CD4-positive, alpha-beta T cell (primary cell): ENCODE measurements at regions of chr10 and their contacts with region 1.

Region 1: DNA sequence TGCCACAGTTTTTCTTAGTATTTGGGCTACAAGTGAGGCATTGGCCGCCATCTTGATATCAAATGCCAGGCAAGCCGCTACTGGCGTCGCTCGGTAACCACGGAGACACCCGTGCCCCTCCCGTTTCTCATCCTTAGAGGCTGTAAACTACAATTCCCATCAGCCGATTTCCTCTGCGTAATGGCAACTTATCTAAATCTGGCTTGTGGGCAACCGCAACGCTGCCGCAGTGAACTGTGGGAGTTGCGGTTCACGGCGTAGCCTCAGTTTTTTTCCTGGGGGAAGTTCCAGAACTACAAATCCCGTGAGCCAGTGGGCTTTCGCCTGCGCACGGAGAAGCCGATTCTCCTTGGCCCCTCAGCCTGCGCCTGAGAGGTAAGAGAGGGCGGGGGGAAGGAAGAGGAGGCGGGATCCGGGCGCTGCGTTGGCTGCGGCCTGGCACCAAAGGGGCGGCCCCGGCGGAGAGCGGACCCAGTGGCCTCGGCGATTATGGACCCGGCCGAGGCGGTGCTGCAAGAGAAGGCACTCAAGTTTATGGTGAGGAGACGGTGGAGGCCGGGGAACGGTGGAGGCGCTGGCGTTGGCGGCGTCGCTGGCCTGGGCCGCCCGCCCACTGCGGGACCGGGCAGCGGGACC is at the start of gene BTRC:
- DNase-seq: peak; percentile 87 to 99 (median 92)
- ATAC-seq: peak; percentile 94
- H3K4me3 ChIP-seq: peak within 1 kb of the TSS; percentile 79
- H3K4me3 Mint-ChIP-seq: peak within 1 kb of the TSS; percentile 100
- H3K27ac ChIP-seq: peak within 1 kb of the TSS; percentile 26 to 86
- H3K27ac Mint-ChIP-seq: peak within 1 kb of the TSS; percentile 94
- H3K4me1 ChIP-seq: peaks cover 17% of the 10 kb centered on the region
- H3K4me1 Mint-ChIP-seq: peaks cover 39% of the 10 kb centered on the region
- H3K27me3 ChIP-seq: peaks cover 0 to 5% of the 10 kb centered on the region in 2 experiments
- H3K27me3 Mint-ChIP-seq: peaks cover 17% of the 10 kb centered on the region
- CTCF ChIP-seq: no peak
- total RNA-seq, gene BTRC: 13.1 to 13.2 TPM

Region 2: DNA sequence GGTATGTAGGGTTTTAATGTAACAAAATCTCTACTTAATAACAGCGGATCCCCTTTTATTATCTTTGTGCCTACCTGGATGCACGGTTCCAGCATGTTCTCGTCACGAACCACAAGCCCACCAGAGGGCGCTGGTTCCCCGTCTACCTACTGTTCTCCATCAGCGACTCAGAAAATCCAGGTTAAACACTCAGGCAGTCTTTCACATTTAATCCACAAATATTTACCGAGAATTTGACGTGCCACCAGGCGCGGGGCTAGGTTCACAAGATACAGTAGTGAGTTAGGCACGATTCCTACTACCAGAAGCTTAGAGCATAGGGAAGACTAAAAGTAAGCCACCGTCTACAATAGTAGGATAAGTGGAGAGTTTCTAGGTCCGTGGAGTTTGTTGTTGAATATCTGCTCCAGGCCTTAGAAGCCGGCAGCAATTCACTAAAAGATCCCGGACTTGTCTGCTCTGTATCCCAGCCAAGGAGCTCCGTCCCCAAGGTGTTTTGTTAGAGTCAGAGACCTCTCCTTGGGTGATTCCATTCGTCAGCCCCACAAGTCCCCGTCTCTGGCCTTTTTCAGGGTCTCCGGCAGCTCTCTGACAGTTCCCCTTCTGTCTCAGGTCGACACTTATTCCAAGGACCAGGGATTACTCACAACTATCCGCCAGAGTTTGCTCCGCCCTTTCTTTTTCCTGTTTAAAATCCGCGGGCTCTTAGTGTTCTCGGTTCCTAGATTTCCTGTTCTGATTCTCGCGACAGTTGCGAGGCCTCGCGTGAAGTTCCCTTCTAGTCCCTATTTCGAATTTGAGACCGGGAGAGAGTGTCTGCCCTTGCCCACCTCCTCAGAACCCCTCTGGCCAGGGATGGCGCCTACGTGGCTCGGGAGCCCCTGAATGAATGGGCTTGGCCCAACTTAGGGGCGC is 293.5 kb before region 1 on chr10:
- CTCF ChIA-PET with region 1: no interaction called
- POLR2A ChIA-PET with region 1: no interaction called
- intact Hi-C with region 1: loop called in 1 of 2 experiments (anchors 10 kb)
- DNase-seq: peak; percentile 79 to 95 (median 90)
- ATAC-seq: peak; percentile 70
- H3K4me3 ChIP-seq: peak overlapping the region; percentile 85
- H3K4me3 Mint-ChIP-seq: peak overlapping the region; percentile 95
- H3K27ac ChIP-seq: peak overlapping the region; percentile 88 to 91
- H3K27ac Mint-ChIP-seq: peak overlapping the region; percentile 81
- H3K4me1 ChIP-seq: peaks cover 40% of the 10 kb centered on the region
- H3K4me1 Mint-ChIP-seq: peaks cover 31% of the 10 kb centered on the region
- H3K27me3 ChIP-seq: peaks cover 27% of the 10 kb centered on the region in 2 experiments
- H3K27me3 Mint-ChIP-seq: peaks cover 20% of the 10 kb centered on the region
- CTCF ChIP-seq: peak; percentile 98

Region 3: DNA sequence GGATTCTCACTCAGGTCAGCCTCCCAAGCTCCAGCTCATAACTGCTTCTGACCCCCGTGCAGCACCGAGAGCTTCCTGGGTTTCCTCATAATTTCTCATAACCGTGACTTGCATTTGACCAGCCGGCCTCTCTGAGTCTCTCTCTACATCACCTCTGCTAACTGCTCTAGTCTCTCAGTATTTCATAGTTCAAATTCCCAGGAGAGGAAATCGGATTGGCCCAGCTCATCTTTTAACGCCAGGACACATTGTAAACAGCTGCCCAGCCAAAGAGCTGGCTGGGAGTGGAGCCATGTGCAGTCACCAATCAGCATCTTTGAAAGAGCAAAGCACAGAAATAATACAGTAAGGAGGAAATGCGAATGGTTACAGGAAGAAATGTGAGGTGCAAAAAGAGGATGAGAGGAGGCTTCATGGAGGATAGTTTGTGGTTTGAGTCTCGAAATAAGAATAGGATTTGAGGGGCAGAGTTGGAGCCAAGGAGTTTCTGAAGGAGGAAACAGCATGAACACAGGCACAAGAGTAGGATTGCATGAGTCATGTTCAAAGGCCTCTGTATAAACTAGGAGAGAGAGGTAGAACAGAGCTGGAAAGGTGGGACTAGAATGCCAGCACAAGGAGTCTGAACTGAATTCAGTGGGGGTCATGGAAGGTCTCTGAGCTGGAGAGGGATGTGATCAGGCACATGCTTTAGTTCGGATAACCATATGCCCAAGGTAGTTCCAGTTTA is 109.3 kb before region 1 on chr10:
- CTCF ChIA-PET with region 1: no interaction called
- POLR2A ChIA-PET with region 1: no interaction called
- intact Hi-C with region 1: no loop called
- DNase-seq: no peak
- ATAC-seq: no peak
- H3K4me3 ChIP-seq: no peak overlapping the region
- H3K4me3 Mint-ChIP-seq: no peak overlapping the region
- H3K27ac ChIP-seq: no peak overlapping the region
- H3K27ac Mint-ChIP-seq: no peak overlapping the region
- H3K4me1 ChIP-seq: no peaks in the 10 kb centered on the region
- H3K4me1 Mint-ChIP-seq: no peaks in the 10 kb centered on the region
- H3K27me3 ChIP-seq: peaks cover 29 to 50% of the 10 kb centered on the region in 2 experiments
- H3K27me3 Mint-ChIP-seq: peaks cover 80% of the 10 kb centered on the region
- CTCF ChIP-seq: no peak

Region 4: GRCh38 chr10:101441541-101442455 is 88.0 kb after region 1 on chr10:
- CTCF ChIA-PET with region 1: no interaction called
- POLR2A ChIA-PET with region 1: no interaction called
- intact Hi-C with region 1: no loop called
- DNase-seq: peak in 6 of 14 experiments; percentile 3 to 63 (median 28)
- ATAC-seq: peak; percentile 98
- H3K4me3 ChIP-seq: no peak overlapping the region
- H3K4me3 Mint-ChIP-seq: no peak overlapping the region
- H3K27ac ChIP-seq: no peak overlapping the region
- H3K27ac Mint-ChIP-seq: no peak overlapping the region
- H3K4me1 ChIP-seq: no peaks in the 10 kb centered on the region
- H3K4me1 Mint-ChIP-seq: peaks cover 10% of the 10 kb centered on the region
- H3K27me3 ChIP-seq: no peaks in the 10 kb centered on the region
- H3K27me3 Mint-ChIP-seq: no peaks in the 10 kb centered on the region
- CTCF ChIP-seq: peak; percentile 31

Region 5: GRCh38 chr10:101830322-101831168 is 476.7 kb after region 1 on chr10:
- CTCF ChIA-PET with region 1: no interaction called
- POLR2A ChIA-PET with region 1: no interaction called
- intact Hi-C with region 1: loop called in 1 of 2 experiments (anchors 10 kb)
- DNase-seq: peak; percentile 91 to 99 (median 94)
- ATAC-seq: peak; percentile 79
- H3K4me3 ChIP-seq: peak overlapping the region; percentile 63
- H3K4me3 Mint-ChIP-seq: peak overlapping the region; percentile 94
- H3K27ac ChIP-seq: peak overlapping the region; percentile 76 to 85
- H3K27ac Mint-ChIP-seq: peak overlapping the region; percentile 99
- H3K4me1 ChIP-seq: peaks cover 69% of the 10 kb centered on the region
- H3K4me1 Mint-ChIP-seq: peaks cover 55% of the 10 kb centered on the region
- H3K27me3 ChIP-seq: no peaks in the 10 kb centered on the region
- H3K27me3 Mint-ChIP-seq: peaks cover 5% of the 10 kb centered on the region
- CTCF ChIP-seq: no peak

Region 6: DNA sequence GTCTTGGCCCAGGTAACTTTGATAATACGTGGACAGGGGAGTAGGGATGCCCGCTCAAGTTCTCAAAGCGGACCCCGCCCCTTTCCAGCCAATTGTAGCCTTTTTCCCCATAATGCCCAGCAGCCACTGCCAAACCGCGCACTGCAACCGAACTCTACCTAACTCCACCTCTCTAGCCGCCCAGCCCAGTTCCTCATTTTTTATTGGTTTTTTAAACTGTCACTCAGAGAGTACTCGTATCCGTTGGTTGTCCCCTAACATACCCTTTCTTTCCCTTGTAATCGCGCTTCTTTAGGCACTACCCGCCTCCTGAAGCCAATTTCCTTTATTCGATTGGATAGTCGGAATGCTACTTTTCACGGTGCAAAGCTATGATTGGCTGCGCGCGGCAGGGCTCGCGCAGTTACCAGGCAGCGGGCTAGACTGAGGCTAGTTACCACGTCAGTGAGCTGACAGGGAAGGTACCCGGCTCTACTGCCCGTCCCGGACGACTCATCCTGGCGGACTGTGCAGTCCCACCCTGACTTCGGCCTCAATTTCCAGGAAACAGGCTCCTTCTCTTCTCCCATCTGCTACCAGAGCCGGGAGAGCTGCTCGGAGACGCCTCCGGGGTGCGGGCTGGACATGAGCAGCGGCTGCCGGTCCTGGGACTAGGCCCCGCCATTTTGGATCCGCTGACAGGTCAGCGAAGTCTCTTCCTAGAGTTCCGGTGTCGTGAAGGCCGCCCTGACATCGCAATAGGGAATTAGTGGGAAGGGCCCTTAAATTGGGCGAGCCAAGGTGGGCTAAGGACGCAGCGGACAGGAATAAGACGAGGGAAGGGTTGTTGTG is 891.5 kb after region 1 on chr10 and contains the start of gene GBF1:
- CTCF ChIA-PET with region 1: no interaction called
- POLR2A ChIA-PET with region 1: no interaction called
- intact Hi-C with region 1: loop called in 1 of 2 experiments (anchors 5 kb)
- DNase-seq: peak; percentile 76 to 99 (median 84)
- ATAC-seq: peak; percentile 89
- H3K4me3 ChIP-seq: peak within 1 kb of the TSS; percentile 74
- H3K4me3 Mint-ChIP-seq: peak within 1 kb of the TSS; percentile 96
- H3K27ac ChIP-seq: peak within 1 kb of the TSS; percentile 84 to 88
- H3K27ac Mint-ChIP-seq: peak within 1 kb of the TSS; percentile 86
- H3K4me1 ChIP-seq: peaks cover 60% of the 10 kb centered on the region
- H3K4me1 Mint-ChIP-seq: peaks cover 58% of the 10 kb centered on the region
- H3K27me3 ChIP-seq: peaks cover 20 to 28% of the 10 kb centered on the region in 2 experiments
- H3K27me3 Mint-ChIP-seq: peaks cover 40% of the 10 kb centered on the region
- CTCF ChIP-seq: no peak
- total RNA-seq, gene GBF1: 28.8 to 30.9 TPM

Region 7: DNA sequence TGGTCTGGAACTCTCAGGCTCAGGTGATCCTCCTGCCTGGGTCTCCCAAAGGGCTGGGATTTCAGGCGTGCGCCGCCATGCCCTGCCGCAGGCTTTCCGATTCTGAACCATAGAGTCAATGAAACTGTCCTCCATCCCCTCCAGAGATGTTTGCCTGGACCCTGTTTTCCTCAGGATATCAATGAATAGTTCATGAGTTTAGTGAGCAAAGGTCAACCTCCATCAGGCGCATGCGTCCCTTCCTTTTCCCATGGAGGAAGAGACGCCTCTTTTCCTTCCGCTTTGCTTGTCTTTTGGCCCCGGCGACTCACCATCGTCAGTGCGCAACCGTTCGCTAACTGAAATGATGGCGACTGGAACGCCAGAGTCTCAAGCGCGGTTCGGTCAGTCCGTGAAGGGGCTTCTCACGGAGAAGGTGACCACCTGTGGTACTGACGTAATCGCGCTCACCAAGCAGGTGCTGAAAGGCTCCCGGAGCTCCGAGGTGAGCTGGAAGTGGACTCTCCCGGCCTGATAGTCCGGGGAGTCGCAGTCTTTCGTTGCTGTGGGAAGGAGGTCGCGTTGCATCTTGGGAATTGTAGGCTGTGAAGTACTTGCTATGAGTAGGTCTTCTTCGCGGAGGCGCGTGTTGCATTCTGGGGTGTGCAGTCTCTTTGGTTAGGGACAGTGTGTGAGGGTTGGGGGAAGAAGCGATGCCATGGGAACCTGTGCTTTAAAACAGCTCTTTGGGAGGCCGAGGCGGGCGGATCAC is 1500.3 kb after region 1 on chr10 and contains the start of gene BORCS7:
- CTCF ChIA-PET with region 1: no interaction called
- POLR2A ChIA-PET with region 1: no interaction called
- intact Hi-C with region 1: loop called in 1 of 2 experiments (anchors 10 kb)
- DNase-seq: peak; percentile 70 to 94 (median 78)
- ATAC-seq: peak; percentile 99
- H3K4me3 ChIP-seq: peak within 1 kb of the TSS; percentile 98
- H3K4me3 Mint-ChIP-seq: peak within 1 kb of the TSS; percentile 85
- H3K27ac ChIP-seq: peak within 1 kb of the TSS; percentile 87 to 97
- H3K27ac Mint-ChIP-seq: peak within 1 kb of the TSS; percentile 96
- H3K4me1 ChIP-seq: peaks cover 15% of the 10 kb centered on the region
- H3K4me1 Mint-ChIP-seq: peaks cover 16% of the 10 kb centered on the region
- H3K27me3 ChIP-seq: no peaks in the 10 kb centered on the region
- H3K27me3 Mint-ChIP-seq: no peaks in the 10 kb centered on the region
- CTCF ChIP-seq: no peak
- total RNA-seq, gene BORCS7: 10.6 to 11.6 TPM